Ascending aorta (tissue), 2 donors: ENCODE measurements at regions of chr15 and their contacts with region 1.

Region 1: GRCh38 chr15:85607842-85608241 is 186.9 kb downstream of the KLHL25 start:
- DNase-seq: peak in 1 of 2 donors; percentile 83
- H3K4me3 ChIP-seq: peak overlapping the region in 1 of 2 donors; percentile 37
- H3K27ac ChIP-seq: peak overlapping the region; percentile 69 to 82
- H3K4me1 ChIP-seq: peaks cover 8 to 22% of the 10 kb centered on the region in 2 donors
- H3K27me3 ChIP-seq: no peaks in the 10 kb centered on the region
- CTCF ChIP-seq: no peak

Region 2: GRCh38 chr15:85504749-85505676 is 102.8 kb before region 1 on chr15:
- intact Hi-C with region 1: no loop called
- DNase-seq: peak in 1 of 2 donors; percentile 71
- H3K4me3 ChIP-seq: no peak overlapping the region
- H3K27ac ChIP-seq: no peak overlapping the region
- H3K4me1 ChIP-seq: peaks cover 0 to 6% of the 10 kb centered on the region in 2 donors
- H3K27me3 ChIP-seq: no peaks in the 10 kb centered on the region
- CTCF ChIP-seq: peak; percentile 13 to 67 (median 60)

Region 3: DNA sequence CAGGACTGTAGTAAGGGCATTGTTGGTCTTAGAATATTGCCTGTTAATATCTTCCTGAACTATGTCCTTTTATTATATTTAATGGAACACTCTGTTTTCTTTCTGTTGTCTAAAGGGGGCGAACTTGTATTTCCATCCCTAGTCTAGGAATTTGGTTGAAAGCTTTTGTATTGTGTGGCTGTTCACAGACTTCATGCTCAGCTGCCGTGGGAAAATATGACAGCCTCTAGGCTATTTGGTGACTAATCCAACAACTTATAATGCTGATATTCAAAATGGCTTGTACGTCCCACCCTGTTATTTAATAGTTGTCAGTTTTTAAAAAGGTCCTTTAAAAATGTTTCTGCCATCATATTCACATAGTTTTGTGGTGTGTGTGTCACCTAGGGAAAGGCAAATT is 15.7 kb before region 1 on chr15:
- intact Hi-C with region 1: loop called (anchors 2 kb)
- DNase-seq: no peak
- H3K4me3 ChIP-seq: no peak overlapping the region
- H3K27ac ChIP-seq: no peak overlapping the region
- H3K4me1 ChIP-seq: peaks cover 0 to 15% of the 10 kb centered on the region in 2 donors
- H3K27me3 ChIP-seq: no peaks in the 10 kb centered on the region
- CTCF ChIP-seq: peak in 2 of 3 experiments; percentile 14 to 33

Region 4: GRCh38 chr15:85702321-85703101 is 94.7 kb after region 1 on chr15:
- intact Hi-C with region 1: no loop called
- DNase-seq: no peak
- H3K4me3 ChIP-seq: no peak overlapping the region
- H3K27ac ChIP-seq: peak overlapping the region; percentile 54 to 55
- H3K4me1 ChIP-seq: peaks cover 12 to 34% of the 10 kb centered on the region in 2 donors
- H3K27me3 ChIP-seq: no peaks in the 10 kb centered on the region
- CTCF ChIP-seq: no peak